Psoas muscle (tissue), 8 donors: ENCODE measurements at regions of chr14 and their contacts with region 1.

Region 1: DNA sequence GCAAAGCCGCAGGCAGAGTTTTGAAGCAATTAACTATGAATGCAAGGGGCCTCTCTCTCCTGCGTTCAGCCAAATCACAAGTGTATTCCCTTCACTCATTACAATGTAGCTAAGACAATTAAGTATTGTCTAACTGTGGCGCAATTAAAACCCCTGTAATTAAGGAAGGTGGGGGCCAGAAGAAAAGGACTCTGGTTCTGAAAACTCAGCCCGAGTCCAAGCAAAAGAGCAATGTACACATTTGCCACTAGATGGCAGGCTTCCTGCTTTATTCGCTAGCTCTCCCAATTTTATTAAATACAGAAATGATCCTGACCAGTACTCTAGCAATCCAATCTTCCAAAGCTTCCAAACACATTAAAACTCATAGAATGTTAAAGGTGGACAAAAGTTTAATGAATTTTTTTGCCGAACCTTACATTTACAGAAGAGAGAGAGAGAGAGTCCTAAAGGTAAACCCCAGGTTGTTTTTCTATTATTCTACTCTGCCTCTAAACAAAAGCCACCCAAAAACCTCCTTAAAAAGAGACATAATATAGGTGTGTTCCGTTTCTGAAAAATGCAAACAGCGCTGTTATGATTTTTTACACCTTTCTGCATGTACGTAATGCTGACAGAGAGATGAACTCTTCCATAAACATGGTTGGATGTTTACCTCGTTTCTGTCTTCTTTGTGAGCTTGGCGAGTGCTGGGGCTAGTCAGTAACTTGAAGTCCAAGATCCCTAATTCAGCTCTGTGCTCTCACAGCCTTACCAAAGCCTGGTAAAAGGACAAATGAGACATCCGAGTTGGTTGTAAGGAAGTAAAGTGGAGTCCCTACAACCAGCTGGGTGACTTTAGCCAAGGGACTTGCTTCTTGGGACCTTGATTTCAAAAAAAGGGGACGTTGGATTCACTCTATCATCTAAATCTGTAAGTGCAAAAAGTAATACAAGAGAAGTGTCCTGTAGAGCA is 50.9 kb upstream of the VASH1 start:
- DNase-seq: no peak
- ATAC-seq: peak in 3 of 4 donors; percentile 35 to 61 (median 61)
- H3K4me3 ChIP-seq: no peak overlapping the region
- H3K27ac ChIP-seq: no peak overlapping the region
- H3K4me1 ChIP-seq: peaks cover 4% of the 10 kb centered on the region
- H3K27me3 ChIP-seq: peaks cover 0 to 7% (median 0%) of the 10 kb centered on the region in 3 donors
- CTCF ChIP-seq: peak; percentile 72

Region 2: DNA sequence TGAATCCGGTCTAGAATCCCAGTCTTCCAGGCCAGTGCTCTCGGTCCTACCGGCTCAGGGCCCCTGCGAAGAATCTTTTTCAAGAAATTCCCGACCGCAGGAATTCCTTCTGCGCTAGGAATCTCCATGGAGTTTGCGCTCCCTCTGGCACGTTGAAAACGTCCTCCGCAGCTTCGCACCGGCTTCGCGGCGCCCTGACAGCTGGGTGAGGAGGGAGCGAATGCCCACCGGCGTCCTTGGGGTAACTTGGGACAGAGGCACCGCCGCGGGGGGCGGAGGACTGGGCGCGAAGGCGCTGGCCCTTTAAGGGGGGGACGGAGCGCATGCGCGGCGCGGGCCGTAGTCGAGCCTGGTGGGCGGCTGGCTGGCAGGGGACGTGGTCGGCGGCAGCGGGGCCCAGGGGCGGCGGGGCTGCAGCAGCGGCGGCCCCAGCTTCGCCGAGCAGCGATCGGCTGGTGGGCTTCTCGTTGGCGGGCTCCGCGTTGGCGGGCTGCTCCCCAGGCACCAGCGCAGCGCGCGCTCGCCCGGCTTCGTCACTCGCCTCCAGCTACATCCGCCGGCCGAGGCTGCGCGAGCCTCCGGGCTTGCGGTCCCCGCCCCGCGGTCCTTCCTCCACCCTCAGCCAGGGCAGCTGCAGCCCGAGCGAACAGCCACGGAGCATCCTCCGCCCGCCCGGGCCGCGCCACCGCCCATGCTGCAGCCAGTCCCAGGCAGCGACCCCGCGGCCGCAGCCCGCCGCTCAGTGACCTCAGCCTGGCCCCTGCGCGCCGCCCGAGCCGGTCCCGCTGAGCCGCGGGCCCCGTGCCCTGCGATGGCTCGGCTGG is 51.0 kb after region 1 on chr14 and contains the start of gene VASH1:
- intact Hi-C with region 1: loop called in 1 of 2 experiments (anchors 5 kb)
- DNase-seq: peak; percentile 79 to 82
- ATAC-seq: peak; percentile 59 to 81 (median 74)
- H3K4me3 ChIP-seq: peak within 1 kb of the TSS; percentile 75
- H3K27ac ChIP-seq: peak within 1 kb of the TSS; percentile 56
- H3K4me1 ChIP-seq: no peaks in the 10 kb centered on the region
- H3K27me3 ChIP-seq: peaks cover 0 to 13% (median 4%) of the 10 kb centered on the region in 3 donors
- CTCF ChIP-seq: no peak
- total RNA-seq, gene VASH1: 3.9 to 8.2 (median 5.6) TPM

Region 3: GRCh38 chr14:76784266-76785264 is 74.2 kb after region 1 on chr14:
- intact Hi-C with region 1: loop called (anchors 2 to 5 kb)
- DNase-seq: peak; percentile 76 to 85
- ATAC-seq: peak; percentile 84 to 95 (median 92)
- H3K4me3 ChIP-seq: no peak overlapping the region
- H3K27ac ChIP-seq: no peak overlapping the region
- H3K4me1 ChIP-seq: peaks cover 12% of the 10 kb centered on the region
- H3K27me3 ChIP-seq: no peaks in the 10 kb centered on the region
- CTCF ChIP-seq: peak; percentile 74

Region 4: DNA sequence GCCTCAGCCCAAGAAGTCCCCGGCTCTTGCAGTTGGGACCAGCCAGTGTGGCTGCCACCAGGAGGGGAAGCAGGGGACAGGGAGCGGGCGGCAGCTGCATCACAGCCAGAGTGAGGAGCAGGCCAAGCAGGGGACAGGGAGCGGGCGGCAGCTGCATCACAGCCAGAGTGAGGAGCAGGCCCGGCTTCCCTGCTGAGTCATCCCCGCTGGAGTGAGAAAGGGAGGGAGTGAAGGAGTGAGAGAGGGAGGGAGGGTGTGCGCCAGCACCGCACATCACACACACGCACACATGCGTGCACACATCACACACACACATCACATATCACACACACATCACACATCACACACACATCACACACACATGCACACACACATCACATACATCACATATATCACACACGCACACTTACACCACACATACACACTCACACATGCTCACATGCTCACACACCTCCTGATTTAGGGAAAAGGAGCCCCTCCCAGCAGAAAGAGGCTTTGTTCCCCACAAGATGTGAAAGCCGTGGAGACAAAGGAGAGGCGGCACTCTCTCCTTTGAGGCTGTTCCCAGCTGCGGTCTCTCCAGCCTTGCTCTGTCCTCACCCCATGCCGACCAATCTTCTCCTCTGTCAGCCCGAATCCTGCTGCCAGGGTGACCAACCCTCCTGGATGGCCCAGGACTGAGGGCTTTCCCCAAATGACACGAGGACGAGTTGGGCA is 448.0 kb after region 1 on chr14:
- intact Hi-C with region 1: no loop called
- DNase-seq: peak; percentile 53 to 76
- ATAC-seq: peak; percentile 93 to 97 (median 96)
- H3K4me3 ChIP-seq: no peak overlapping the region
- H3K27ac ChIP-seq: no peak overlapping the region
- H3K4me1 ChIP-seq: no peaks in the 10 kb centered on the region
- H3K27me3 ChIP-seq: peaks cover 0 to 8% (median 5%) of the 10 kb centered on the region in 3 donors
- CTCF ChIP-seq: no peak

Region 5: DNA sequence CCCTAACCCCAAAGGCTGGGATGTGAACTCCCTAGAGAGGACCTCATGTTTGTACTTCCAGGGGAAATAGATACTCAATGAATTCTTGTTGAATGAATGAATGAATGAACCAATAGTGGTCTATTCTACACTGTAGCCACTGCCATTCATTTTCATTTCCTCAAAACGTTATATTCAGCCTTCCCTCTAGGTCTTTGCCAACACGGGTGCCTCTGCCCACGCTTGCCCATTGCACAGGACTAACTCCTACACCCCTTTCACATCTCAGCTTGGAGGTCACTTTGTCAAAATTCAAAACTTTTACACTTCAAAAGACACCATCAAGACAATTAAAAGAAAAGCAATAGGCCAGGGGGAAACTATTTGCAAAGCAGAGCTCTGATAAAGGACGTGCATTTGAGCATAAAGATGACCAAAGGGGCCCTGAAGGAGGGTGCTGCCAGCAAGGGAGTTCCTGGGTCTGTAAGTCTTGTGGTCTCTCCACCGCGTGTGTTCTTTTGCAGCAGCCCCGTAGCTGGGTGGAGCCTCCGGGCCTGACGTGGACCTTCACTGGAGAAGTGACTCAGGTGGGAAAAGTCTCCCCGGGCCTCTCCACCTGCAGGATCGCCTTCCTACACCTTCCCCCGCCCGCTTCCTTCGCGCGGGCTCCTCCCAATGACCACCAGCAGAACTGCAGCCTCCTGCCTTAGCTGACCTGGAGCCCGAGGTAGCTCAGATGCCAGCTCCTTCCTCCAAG is 502.8 kb after region 1 on chr14:
- intact Hi-C with region 1: no loop called
- DNase-seq: peak in 1 of 2 donors; percentile 37
- ATAC-seq: peak in 2 of 4 donors; percentile 39
- H3K4me3 ChIP-seq: no peak overlapping the region
- H3K27ac ChIP-seq: no peak overlapping the region
- H3K4me1 ChIP-seq: no peaks in the 10 kb centered on the region
- H3K27me3 ChIP-seq: peaks cover 0 to 25% (median 5%) of the 10 kb centered on the region in 3 donors
- CTCF ChIP-seq: peak; percentile 26